ENCODE measurements at regions of chr20 and their contacts with region 1.

Region 1: DNA sequence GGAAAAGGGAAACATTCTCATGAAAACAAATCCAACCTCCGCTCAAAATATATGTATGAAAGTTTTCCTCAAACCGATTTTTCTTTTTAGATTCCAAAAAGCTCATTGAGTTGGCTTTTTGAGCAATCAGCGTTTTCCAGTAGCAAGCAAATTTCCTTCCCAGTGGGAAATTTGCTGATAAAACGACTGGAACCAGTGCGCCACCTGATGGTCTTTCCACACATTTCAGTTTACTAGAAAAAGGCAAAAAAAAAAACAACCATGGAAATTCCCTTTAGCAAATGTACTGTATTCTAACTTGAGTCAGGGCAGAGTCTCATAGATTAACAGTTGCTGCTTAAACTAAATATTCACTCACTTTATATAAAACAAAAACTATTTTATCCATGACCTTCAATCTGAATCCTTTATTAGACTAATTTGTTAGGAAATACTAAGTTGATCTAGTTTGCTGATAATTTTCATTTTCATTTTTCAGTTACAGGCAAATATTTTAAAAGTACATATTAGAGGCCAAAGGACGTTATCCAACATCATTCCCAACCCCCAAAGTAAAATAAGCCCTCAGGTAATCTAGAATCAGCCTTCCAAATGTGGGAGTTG is 271.5 kb downstream of the FOXA2 start:
- DNase-seq: peak; percentile 53
- ATAC-seq: peak; percentile 41; the same call in 2 of the 3 replicates
- H3K4me3 ChIP-seq: no peak overlapping the region
- H3K27ac ChIP-seq: no peak overlapping the region
- H3K4me1 ChIP-seq: no peaks in the 10 kb centered on the region
- H3K27me3 ChIP-seq: peaks cover 2 to 14% of the 10 kb centered on the region in 2 experiments; a peak in 2 of 5 replicates
- CTCF ChIP-seq: peak; percentile 77
- EP300 ChIP-seq: no peak
- POLR2A ChIP-seq: no peak
- RAD21 ChIP-seq: peak; percentile 48

Region 2: DNA sequence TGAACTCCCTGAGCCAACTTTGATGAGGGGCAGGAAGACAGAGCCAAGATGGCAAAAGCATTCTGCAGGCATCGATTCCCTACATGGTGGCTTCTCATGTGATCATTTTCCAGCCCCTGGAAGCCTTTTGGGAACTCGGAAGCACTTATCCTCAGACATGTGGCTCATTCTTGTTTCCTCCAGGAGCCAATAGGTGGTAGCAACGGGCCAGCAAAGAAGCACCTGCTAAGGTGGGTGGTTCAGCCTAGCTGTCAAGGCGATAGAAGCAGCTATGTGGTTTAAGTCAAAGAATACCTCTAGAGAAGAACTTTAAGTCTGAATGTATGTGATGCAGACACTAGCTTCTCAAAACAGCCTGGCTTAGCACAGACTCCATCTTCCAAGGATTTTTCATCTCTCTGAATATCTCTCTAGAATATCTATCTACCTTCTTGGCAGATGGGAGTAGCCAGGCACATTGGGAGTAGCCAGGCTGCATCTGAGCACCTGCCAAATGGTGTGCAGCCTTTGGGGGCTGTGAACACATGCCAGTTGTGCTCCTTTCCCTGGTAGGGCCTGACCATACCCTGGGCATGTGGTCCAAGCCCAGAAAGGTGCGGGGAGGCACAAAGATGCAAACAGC is 672.2 kb before region 1 on chr20:
- CTCF ChIA-PET with region 1: no interaction called
- POLR2A ChIA-PET with region 1: no interaction called
- in situ Hi-C with region 1: no loop called
- intact Hi-C with region 1: loop called (anchors 2 kb)
- DNase-seq: peak; percentile 44
- ATAC-seq: peak; percentile 94
- H3K4me3 ChIP-seq: no peak overlapping the region
- H3K27ac ChIP-seq: no peak overlapping the region
- H3K4me1 ChIP-seq: no peaks in the 10 kb centered on the region
- H3K27me3 ChIP-seq: peaks cover 0 to 9% of the 10 kb centered on the region in 2 experiments; a peak in 1 of 5 replicates
- CTCF ChIP-seq: peak; percentile 67
- EP300 ChIP-seq: no peak
- POLR2A ChIP-seq: no peak
- RAD21 ChIP-seq: no peak

Region 3: DNA sequence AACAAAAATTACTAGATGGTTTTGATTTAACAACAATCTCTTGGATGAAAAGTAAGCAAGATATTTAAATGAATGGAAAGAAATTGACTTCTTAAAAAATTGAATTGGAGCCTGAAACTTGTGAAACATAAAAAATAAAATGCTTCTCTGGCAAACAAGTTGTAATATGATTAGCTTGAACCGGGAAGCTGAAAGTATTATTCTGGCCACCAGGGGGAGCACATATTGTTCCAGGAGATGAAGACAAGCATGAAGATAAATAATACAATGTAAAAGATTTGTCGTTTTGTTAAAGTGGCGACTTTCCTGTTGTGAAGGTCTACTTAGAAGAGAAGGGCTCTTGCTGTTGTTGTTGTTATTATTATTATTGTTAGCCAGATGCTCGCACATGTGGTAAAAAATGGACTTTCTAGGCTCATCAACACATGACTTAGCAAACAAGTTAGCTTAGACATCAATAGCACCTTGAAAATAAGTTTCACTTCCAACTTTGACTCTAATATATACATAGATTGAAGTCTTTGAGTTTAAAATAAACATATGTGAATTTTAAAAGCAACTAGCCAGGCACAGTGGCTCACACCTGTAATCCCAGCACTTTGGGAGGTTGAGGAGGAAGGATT is 593.1 kb before region 1 on chr20:
- CTCF ChIA-PET with region 1: interaction called, 5 read pairs
- POLR2A ChIA-PET with region 1: no interaction called
- in situ Hi-C with region 1: no loop called
- intact Hi-C with region 1: loop called (anchors 10 kb)
- DNase-seq: peak; percentile 68
- ATAC-seq: peak; percentile 58; the same call in 2 of the 3 replicates
- H3K4me3 ChIP-seq: no peak overlapping the region
- H3K27ac ChIP-seq: no peak overlapping the region
- H3K4me1 ChIP-seq: no peaks in the 10 kb centered on the region
- H3K27me3 ChIP-seq: peaks cover 1 to 35% of the 10 kb centered on the region in 2 experiments
- CTCF ChIP-seq: peak; percentile 71
- EP300 ChIP-seq: no peak
- POLR2A ChIP-seq: no peak
- RAD21 ChIP-seq: no peak

Region 4: DNA sequence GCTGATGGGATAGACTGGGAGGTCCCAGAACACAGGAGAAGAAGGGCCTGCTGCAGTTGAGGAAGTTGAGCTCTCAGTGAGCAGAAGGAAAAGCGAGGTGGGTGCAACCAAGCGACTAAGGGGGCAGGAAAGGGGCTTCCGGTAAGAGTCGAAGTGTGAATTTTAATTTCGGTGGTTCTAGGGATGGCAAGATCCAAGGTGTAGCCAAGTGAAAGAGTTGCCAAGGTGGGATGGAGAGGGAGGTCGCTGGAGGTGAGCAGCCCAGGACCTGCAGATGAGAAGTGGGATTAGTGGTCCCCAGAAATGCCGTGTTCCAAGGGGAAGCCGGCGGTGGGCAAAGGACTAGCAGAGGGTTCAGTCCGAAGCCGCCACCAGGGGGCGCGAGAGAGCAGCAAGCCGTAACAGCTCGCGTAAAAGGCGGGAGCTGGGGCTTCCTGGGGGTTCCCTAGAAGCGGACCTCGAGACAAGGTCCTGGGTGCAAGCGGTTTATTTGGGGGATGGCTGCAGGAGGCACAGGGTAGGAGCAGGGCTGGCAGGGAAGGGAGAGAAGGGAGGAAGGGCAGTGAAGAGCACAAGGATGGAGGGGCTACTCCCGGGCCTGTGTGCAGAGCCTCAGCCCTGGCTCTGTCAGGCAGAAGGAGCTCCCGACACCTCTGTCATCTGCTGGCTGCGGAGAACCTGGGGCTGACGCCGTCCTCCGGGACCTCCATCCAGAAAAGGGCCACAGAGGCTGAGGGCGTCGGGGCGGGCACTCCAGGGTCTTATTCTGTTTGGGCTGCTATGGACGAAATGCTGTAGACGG is 503.8 kb before region 1 on chr20:
- CTCF ChIA-PET with region 1: interaction called, 13 read pairs
- POLR2A ChIA-PET with region 1: no interaction called
- in situ Hi-C with region 1: loop called (anchors 10 kb)
- intact Hi-C with region 1: loop called (anchors 10 kb)
- DNase-seq: peak; percentile 31
- ATAC-seq: peak; percentile 92
- H3K4me3 ChIP-seq: no peak overlapping the region
- H3K27ac ChIP-seq: no peak overlapping the region
- H3K4me1 ChIP-seq: no peaks in the 10 kb centered on the region
- H3K27me3 ChIP-seq: peaks cover 3 to 10% of the 10 kb centered on the region in 2 experiments; a peak in 2 of 5 replicates
- CTCF ChIP-seq: peak; percentile 94
- EP300 ChIP-seq: no peak
- POLR2A ChIP-seq: no peak
- RAD21 ChIP-seq: peak; percentile 83

Measured in HepG2 (cell line).